ENCODE measurements at regions of chr5 and their contacts with region 1.

Region 1: DNA sequence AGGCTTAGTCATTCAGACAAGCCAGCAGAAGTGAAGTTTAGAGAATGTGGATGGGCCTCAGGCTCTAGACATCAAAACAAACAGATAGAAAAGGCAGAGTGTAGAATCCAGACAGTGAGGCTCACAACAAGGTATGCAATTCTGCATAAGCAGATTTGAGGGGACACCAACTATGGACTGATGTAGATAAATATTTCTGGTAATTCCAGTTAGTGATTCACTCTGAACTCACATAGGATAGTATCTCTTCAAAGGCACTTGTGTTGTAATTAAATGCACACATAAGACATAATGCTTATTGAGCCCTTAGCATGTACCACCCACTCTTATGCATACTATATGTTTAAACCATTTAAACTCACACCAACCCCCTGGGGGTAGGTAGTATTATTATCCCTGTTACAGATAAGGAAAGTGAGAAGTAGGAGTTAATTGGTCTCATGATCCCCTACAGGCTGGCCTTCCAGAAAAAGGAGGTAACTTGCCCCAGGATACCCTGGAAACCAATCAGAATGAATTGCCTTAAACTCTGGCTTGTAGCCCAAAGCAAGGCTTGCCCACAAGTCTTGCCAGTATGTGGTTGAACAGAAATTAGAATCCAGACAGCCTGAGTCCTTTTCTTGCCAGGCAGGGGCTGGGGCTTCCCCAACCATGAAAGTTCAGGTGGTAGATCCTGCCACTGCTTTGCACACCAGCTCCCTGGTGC is 39.5 kb upstream of the HSPB3 start:
- DNase-seq: peak in 1 of 2 experiments; percentile 56
- ATAC-seq: peak; percentile 62 to 86; a peak in 4 of 6 replicates
- H3K4me3 ChIP-seq: no peak overlapping the region
- H3K27ac ChIP-seq: peak overlapping the region; percentile 17 to 40; a peak in 1 of 6 replicates
- H3K4me1 ChIP-seq: no peaks in the 10 kb centered on the region
- CTCF ChIP-seq: no peak
- EP300 ChIP-seq: no peak
- POLR2A ChIP-seq: no peak
- RAD21 ChIP-seq: no peak

Region 2: GRCh38 chr5:54243473-54244080 is 172.5 kb before region 1 on chr5:
- CTCF ChIA-PET with region 1: interaction called, 22 read pairs
- POLR2A ChIA-PET with region 1: interaction called, 3 read pairs
- DNase-seq: peak; percentile 12 to 52
- ATAC-seq: peak; percentile 50 to 65; a peak in 3 of 6 replicates
- H3K4me3 ChIP-seq: no peak overlapping the region
- H3K27ac ChIP-seq: no peak overlapping the region
- H3K4me1 ChIP-seq: 0 out of 3 replicates have a peak, but pooled peaks cover 3% of the 10 kb centered on the region
- CTCF ChIP-seq: peak; percentile 84
- EP300 ChIP-seq: no peak
- POLR2A ChIP-seq: no peak
- RAD21 ChIP-seq: peak; percentile 80

Region 3: DNA sequence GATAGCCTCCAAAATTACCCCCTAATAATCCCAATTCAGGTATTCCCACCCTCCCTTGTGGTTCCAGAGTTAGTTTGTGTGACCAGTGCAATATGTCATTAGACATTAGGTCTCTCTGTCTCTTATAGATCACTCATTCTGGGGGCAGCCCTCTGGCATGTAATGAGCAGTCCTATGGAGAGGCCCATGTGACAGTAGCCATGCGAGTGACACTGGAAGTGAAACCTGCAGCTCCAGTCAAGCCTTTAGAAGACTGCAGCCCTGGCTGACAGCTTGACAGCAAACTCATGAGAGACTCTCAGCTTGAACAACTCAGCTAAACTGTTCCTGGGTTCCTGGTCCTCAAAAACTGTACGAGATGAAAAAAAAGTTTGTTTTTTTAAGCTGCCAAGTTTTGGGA is 14.5 kb before region 1 on chr5:
- CTCF ChIA-PET with region 1: interaction called, 14 read pairs
- POLR2A ChIA-PET with region 1: no interaction called
- DNase-seq: no peak
- ATAC-seq: no peak
- H3K4me3 ChIP-seq: no peak overlapping the region
- H3K27ac ChIP-seq: no peak overlapping the region
- H3K4me1 ChIP-seq: peaks cover 8% of the 10 kb centered on the region; the same call in 2 of the 3 replicates
- CTCF ChIP-seq: no peak
- EP300 ChIP-seq: no peak
- POLR2A ChIP-seq: no peak
- RAD21 ChIP-seq: no peak

Region 4: GRCh38 chr5:54533541-54534190 is 117.6 kb after region 1 on chr5:
- CTCF ChIA-PET with region 1: no interaction called
- POLR2A ChIA-PET with region 1: no interaction called
- DNase-seq: no peak
- ATAC-seq: no peak
- H3K4me3 ChIP-seq: no peak overlapping the region
- H3K27ac ChIP-seq: no peak overlapping the region
- H3K4me1 ChIP-seq: no peaks in the 10 kb centered on the region
- CTCF ChIP-seq: no peak
- EP300 ChIP-seq: no peak
- POLR2A ChIP-seq: no peak
- RAD21 ChIP-seq: no peak

Measured in A549 (cell line).